A549 (cell line): ENCODE measurements at regions of chr3 and their contacts with region 1.

Region 1: DNA sequence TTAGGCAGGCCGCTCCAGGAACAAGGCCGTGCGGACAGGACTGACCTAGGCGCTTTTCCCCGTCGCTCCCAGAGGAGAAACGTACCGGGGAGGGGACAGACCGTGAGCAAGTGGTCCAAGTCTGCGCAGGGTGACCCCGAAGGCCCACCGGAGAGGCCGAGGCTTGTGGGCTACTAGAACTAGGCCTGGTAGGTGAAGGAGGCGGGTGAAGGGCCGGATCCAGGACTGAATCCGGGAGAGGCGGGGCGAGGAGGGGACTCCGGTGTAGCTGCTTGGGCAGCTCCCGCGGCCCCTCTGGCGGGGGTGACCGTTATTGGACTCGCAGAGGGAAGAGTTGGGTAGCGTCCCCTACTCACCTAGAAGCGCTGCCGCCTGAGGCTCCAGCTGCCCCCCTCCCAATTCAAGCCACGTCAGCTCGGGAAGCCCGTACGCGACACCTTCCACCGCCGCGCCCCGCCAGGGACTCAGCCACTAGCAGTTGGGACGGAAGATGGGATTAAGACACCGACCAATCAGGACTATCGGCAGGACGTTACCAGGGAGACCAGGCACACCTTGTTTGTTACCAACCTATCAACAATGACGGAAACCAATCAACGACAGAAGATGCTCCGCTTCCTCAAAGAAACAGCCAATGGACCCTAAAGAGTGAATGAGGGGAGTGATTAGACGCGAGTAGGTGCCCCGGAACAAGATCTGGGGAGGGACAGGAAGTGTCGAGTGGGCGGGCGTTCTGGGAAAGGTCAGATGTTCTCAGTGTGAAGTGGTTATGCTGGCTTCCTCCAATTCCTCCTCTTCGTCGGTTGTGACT is at the start of gene GOLGB1:
- DNase-seq: peak; percentile 99
- ATAC-seq: peak; percentile 98 to 99
- H3K4me3 ChIP-seq: peak within 1 kb of the TSS; percentile 62
- H3K27ac ChIP-seq: peak within 1 kb of the TSS; percentile 76 to 90
- H3K4me1 ChIP-seq: peaks cover 13% of the 10 kb centered on the region; the same call in 2 of the 3 replicates
- CTCF ChIP-seq: no peak
- EP300 ChIP-seq: no peak
- POLR2A ChIP-seq: peak; percentile 96
- RAD21 ChIP-seq: no peak
- polyA plus RNA-seq, gene GOLGB1: 27.0 and 29.4 TPM in 2 replicates

Region 2: DNA sequence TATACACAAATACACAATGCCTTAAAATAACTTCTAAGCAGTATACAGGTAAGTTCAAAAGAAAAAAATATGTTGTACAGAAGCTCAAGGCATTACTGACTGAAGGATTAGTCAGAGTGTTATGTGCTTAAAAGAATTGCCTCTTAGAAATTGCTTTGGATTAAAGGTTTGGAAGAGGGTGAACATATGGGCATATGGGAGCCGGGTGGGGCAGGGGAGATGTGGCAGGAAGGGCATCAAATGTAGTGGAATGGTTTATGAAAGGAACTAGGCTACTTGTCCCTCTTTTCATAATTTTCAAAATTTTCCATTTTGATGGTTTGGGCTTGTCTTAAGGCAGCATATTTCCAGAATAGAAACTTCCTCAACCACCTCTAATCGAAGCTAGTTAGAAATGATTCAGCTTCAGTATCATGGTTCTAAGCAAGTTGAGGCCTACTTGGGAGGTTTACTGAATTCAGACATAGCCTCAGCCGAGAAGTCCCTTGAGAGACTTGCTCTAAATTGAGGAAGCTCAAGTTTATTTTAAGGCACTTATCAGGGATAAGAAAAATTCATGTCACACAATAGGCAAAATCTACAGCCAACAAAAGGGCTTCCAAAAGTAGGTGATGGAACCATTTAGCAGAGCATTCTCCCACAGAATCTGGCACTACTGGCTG is 10.2 kb after region 1 on chr3:
- CTCF ChIA-PET with region 1: no interaction called
- POLR2A ChIA-PET with region 1: no interaction called
- DNase-seq: no peak
- ATAC-seq: no peak
- H3K4me3 ChIP-seq: no peak overlapping the region
- H3K27ac ChIP-seq: no peak overlapping the region
- H3K4me1 ChIP-seq: no peaks in the 10 kb centered on the region
- CTCF ChIP-seq: no peak
- EP300 ChIP-seq: no peak
- POLR2A ChIP-seq: no peak
- RAD21 ChIP-seq: no peak

Region 3: GRCh38 chr3:121883507-121883906 is 134.0 kb after region 1 on chr3:
- CTCF ChIA-PET with region 1: no interaction called
- POLR2A ChIA-PET with region 1: no interaction called
- DNase-seq: peak; percentile 22 to 35
- ATAC-seq: peak in 1 of 2 experiments; percentile 52; a peak in 1 of 6 replicates
- H3K4me3 ChIP-seq: no peak overlapping the region
- H3K27ac ChIP-seq: no peak overlapping the region
- H3K4me1 ChIP-seq: no peaks in the 10 kb centered on the region
- CTCF ChIP-seq: no peak; the same call in 2 of the 3 replicates
- EP300 ChIP-seq: no peak
- POLR2A ChIP-seq: no peak
- RAD21 ChIP-seq: peak; percentile 14 to 26; a peak in 1 of 5 replicates

Region 4: GRCh38 chr3:121951291-121951919 is 201.9 kb after region 1 on chr3:
- CTCF ChIA-PET with region 1: no interaction called
- POLR2A ChIA-PET with region 1: interaction called, 13 read pairs
- DNase-seq: no peak
- ATAC-seq: no peak
- H3K4me3 ChIP-seq: no peak overlapping the region
- H3K27ac ChIP-seq: no peak overlapping the region
- H3K4me1 ChIP-seq: no peaks in the 10 kb centered on the region
- CTCF ChIP-seq: no peak
- EP300 ChIP-seq: no peak
- POLR2A ChIP-seq: no peak
- RAD21 ChIP-seq: no peak

Region 5: GRCh38 chr3:122146466-122146865 is 397.0 kb after region 1 on chr3:
- CTCF ChIA-PET with region 1: no interaction called
- POLR2A ChIA-PET with region 1: no interaction called
- DNase-seq: no peak
- ATAC-seq: no peak
- H3K4me3 ChIP-seq: no peak overlapping the region
- H3K27ac ChIP-seq: no peak overlapping the region
- H3K4me1 ChIP-seq: no peaks in the 10 kb centered on the region
- CTCF ChIP-seq: no peak
- EP300 ChIP-seq: no peak
- POLR2A ChIP-seq: no peak
- RAD21 ChIP-seq: no peak